Left lung (tissue), 14 donors: ENCODE measurements at regions of chr15 and their contacts with region 1.

Region 1: GRCh38 chr15:68559345-68560310 is 19.2 kb upstream of the CORO2B start:
- DNase-seq: peak; percentile 78 to 98 (median 87)
- ATAC-seq: peak; percentile 99
- H3K4me3 ChIP-seq: peak overlapping the region; percentile 16 to 35
- H3K27ac ChIP-seq: no peak overlapping the region
- H3K4me1 ChIP-seq: peaks cover 8 to 17% of the 10 kb centered on the region in 2 donors
- H3K27me3 ChIP-seq: peaks cover 0 to 44% of the 10 kb centered on the region in 2 donors
- CTCF ChIP-seq: peak; percentile 96 to 97

Region 2: GRCh38 chr15:68650901-68651709 is 91.5 kb after region 1 on chr15:
- intact Hi-C with region 1: loop called in 1 of 2 experiments (anchors 10 kb)
- DNase-seq: peak in 1 of 4 donors; percentile 87
- ATAC-seq: peak; percentile 70
- H3K4me3 ChIP-seq: no peak overlapping the region
- H3K27ac ChIP-seq: no peak overlapping the region
- H3K4me1 ChIP-seq: no peaks in the 10 kb centered on the region
- H3K27me3 ChIP-seq: no peaks in the 10 kb centered on the region
- CTCF ChIP-seq: peak; percentile 45 to 69

Region 3: GRCh38 chr15:68672781-68673205 is 113.2 kb after region 1 on chr15:
- intact Hi-C with region 1: loop called in 1 of 2 experiments (anchors 5 kb)
- DNase-seq: no peak
- ATAC-seq: no peak
- H3K4me3 ChIP-seq: no peak overlapping the region
- H3K27ac ChIP-seq: no peak overlapping the region
- H3K4me1 ChIP-seq: peaks cover 3 to 16% of the 10 kb centered on the region in 2 donors
- H3K27me3 ChIP-seq: no peaks in the 10 kb centered on the region
- CTCF ChIP-seq: no peak